ENCODE measurements at regions of chr13 and their contacts with region 1.

Region 1: GRCh38 chr13:30617315-30618185 is at the start of gene USPL1:
- DNase-seq: peak; percentile 100
- H3K4me3 Mint-ChIP-seq: no peak within 1 kb of the TSS
- H3K27ac Mint-ChIP-seq: no peak within 1 kb of the TSS
- H3K4me1 Mint-ChIP-seq: peaks cover 30% of the 10 kb centered on the region
- H3K27me3 Mint-ChIP-seq: no peaks in the 10 kb centered on the region
- total RNA-seq, gene USPL1: 16.2 and 18.7 TPM in 2 replicates

Region 2: GRCh38 chr13:29595380-29596063 is 1022.0 kb before region 1 on chr13 and contains the start of gene SLC7A1:
- intact Hi-C with region 1: loop called (anchors 10 kb)
- DNase-seq: peak; percentile 97
- H3K4me3 Mint-ChIP-seq: peak within 1 kb of the TSS; percentile 95
- H3K27ac Mint-ChIP-seq: peak within 1 kb of the TSS; percentile 97
- H3K4me1 Mint-ChIP-seq: peaks cover 38% of the 10 kb centered on the region
- H3K27me3 Mint-ChIP-seq: peaks cover 5% of the 10 kb centered on the region
- total RNA-seq, gene SLC7A1: 137 and 138 TPM in 2 replicates

Region 3: DNA sequence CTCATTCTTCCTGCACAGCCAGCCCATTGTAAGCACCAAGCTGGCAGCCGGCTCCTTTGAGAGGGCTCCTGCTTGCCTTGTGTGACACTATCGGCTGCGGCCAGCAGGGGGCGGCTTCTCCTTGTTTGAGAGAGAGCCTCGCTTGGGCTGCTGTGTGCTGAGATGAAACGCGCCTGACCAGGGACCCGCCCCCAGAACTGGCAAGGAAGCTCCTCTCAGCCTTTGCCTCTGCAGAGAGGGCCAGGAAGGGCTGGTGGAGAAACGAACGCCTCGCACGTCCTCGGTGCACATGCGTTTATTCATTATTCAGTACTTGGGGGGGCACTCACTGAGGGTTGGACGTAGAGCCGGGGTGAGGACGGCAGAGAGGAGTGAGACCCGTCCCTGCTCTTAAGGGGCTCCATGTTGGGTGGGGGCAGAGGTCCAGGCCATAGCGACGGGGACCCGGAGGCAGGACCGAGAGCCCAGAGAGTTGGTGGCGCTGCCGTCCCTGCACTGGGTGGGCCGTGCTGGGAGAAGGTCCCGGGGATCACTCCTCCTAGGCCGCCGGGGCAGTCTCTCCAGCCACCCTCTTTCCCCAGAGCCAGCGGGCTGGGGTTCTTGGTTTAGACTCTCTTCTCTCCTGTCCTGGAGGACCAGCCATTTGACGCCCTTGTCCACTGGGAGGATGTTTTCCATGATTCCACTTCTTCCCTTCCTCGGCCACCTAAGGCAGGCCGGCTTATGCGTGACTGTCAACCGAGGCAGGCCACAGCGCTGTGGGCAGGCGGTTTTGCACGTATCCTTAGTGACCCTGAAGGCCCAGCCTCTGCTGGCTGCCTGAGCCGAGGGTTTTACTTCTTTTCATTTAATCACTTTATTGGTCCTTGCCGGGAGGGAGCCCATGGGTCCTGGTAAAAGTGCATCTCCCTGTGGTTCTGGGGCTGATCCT is 484.7 kb before region 1 on chr13:
- intact Hi-C with region 1: loop called (anchors 5 kb)
- DNase-seq: peak; percentile 99
- H3K4me3 Mint-ChIP-seq: peak overlapping the region; percentile 19
- H3K27ac Mint-ChIP-seq: peak overlapping the region; percentile 59
- H3K4me1 Mint-ChIP-seq: peaks cover 19% of the 10 kb centered on the region
- H3K27me3 Mint-ChIP-seq: no peaks in the 10 kb centered on the region

Region 4: DNA sequence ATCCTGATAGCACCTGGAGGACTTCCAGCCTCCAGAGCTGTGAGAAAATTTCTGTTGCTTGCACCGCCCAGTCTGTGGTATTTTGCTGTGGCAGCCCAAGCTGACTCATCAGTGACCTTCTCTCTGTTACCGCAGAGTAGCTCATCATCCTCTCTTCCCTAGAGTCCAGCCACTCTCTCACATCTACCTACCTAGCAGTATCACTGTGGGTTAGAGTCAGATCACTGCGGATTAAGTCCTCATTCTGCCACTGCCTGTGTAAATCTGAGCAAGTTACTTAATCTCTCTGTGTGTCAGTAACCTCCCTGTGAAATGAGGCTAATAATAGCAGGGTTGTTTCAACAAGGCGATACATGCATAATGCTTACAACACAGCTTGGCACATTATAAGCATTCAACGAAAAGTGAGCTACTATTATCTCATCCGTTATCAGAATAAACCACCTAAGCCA is 40.1 kb before region 1 on chr13:
- intact Hi-C with region 1: loop called (anchors 2 kb)
- DNase-seq: peak; percentile 76
- H3K4me3 Mint-ChIP-seq: no peak overlapping the region
- H3K27ac Mint-ChIP-seq: no peak overlapping the region
- H3K4me1 Mint-ChIP-seq: peaks cover 26% of the 10 kb centered on the region
- H3K27me3 Mint-ChIP-seq: peaks cover 16% of the 10 kb centered on the region

Region 5: GRCh38 chr13:30673669-30674521 is 56.3 kb after region 1 on chr13:
- intact Hi-C with region 1: loop called (anchors 1 kb)
- DNase-seq: peak; percentile 96
- H3K4me3 Mint-ChIP-seq: peak overlapping the region; percentile 86
- H3K27ac Mint-ChIP-seq: peak overlapping the region; percentile 80
- H3K4me1 Mint-ChIP-seq: peaks cover 9% of the 10 kb centered on the region
- H3K27me3 Mint-ChIP-seq: peaks cover 25% of the 10 kb centered on the region

Region 6: DNA sequence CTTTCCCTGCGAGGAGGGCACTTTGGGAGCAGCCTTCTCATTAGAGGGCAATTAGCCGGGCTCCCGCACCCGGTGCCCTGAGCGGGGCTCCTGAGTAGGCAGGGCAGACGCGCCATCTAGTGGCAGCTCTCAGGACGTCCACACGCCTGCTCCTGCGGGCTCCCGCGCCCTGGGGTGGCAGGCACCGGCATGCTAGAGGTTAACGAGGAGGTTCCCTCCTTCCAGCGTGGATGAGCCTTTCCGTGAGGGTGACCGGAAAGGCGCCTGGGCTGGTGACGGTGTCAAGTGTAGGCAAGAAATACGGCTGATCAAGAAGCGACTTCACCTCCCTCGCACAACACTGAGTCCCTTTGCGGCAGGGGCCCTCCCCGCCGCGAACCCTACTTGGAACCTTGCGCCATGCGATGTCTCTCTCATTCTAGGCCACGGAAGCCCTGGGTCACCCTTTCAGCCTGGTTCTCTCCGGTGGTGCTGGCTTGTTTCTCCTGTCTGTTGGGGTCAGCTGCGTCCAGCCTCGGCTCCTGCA is 185.5 kb after region 1 on chr13:
- intact Hi-C with region 1: loop called (anchors 2 kb)
- DNase-seq: peak; percentile 94
- H3K4me3 Mint-ChIP-seq: peak overlapping the region; percentile 65
- H3K27ac Mint-ChIP-seq: no peak overlapping the region
- H3K4me1 Mint-ChIP-seq: peaks cover 18% of the 10 kb centered on the region
- H3K27me3 Mint-ChIP-seq: no peaks in the 10 kb centered on the region